Naive thymus-derived CD4-positive, alpha-beta T cell (primary cell): ENCODE measurements at regions of chr18 and their contacts with region 1.

Region 1: DNA sequence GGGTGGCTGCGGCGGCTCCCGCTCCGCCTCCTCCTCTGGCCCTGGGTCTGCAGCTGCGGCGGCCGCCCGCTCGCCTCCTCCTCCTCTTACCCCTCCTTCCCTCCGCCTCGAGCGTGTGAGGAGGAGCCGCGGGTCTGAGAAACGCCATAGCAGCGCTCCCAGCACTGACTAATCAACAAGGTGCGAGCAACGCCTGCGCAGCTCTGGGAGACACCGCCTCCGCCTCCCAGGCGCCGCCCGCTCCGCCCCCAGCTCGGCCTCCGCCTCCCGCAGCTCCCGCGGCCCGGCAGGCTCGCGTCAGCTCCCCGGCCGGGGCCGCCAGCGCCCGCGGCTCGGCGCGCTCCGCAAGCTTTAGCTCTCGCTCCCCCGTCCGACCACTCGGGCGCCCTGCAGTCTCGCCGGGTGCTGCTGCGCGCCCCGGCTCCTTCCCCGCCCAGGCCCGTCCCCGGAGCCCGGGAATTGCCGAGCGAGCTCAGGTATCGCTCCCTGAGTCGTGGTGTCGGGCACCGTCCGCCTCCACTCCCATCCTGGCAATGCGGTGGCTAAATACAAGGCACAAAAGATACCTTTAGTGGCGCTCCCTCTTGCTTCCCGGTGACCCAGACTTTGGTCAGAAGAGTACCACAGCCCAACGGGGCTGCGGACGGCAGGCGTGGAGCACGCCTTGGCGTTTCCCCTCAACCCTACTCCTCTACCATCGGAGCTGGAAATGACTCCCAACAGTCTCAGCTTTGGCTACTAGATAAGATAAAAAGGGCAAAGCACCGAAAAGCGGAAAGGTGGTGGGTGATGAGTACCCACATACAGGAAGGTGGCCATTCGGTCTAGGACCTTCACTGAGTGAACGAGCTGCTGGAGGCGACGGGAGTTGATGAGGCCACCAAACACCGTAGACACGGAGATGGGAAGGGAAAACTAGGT is at the start of gene GAREM1:
- DNase-seq: peak; percentile 67 to 82 (median 77)
- ATAC-seq: peak; percentile 95
- H3K4me3 ChIP-seq: peak within 1 kb of the TSS; percentile 58
- H3K4me3 Mint-ChIP-seq: peak within 1 kb of the TSS; percentile 78 to 91 (median 89)
- H3K27ac ChIP-seq: no peak within 1 kb of the TSS
- H3K27ac Mint-ChIP-seq: peak within 1 kb of the TSS in 7 of 9 donors; percentile 21 to 86 (median 56)
- H3K4me1 ChIP-seq: peaks cover 9 to 14% of the 10 kb centered on the region in 2 donors
- H3K4me1 Mint-ChIP-seq: peaks cover 12 to 33% (median 26%) of the 10 kb centered on the region in 7 donors
- H3K27me3 ChIP-seq: peaks cover 4 to 5% of the 10 kb centered on the region in 2 donors
- H3K27me3 Mint-ChIP-seq: peaks cover 28 to 79% (median 33%) of the 10 kb centered on the region in 5 donors
- total RNA-seq, gene GAREM1: 0.13 to 0.51 (median 0.43) TPM in 3 of 5 experiments, not detected in the others

Region 2: DNA sequence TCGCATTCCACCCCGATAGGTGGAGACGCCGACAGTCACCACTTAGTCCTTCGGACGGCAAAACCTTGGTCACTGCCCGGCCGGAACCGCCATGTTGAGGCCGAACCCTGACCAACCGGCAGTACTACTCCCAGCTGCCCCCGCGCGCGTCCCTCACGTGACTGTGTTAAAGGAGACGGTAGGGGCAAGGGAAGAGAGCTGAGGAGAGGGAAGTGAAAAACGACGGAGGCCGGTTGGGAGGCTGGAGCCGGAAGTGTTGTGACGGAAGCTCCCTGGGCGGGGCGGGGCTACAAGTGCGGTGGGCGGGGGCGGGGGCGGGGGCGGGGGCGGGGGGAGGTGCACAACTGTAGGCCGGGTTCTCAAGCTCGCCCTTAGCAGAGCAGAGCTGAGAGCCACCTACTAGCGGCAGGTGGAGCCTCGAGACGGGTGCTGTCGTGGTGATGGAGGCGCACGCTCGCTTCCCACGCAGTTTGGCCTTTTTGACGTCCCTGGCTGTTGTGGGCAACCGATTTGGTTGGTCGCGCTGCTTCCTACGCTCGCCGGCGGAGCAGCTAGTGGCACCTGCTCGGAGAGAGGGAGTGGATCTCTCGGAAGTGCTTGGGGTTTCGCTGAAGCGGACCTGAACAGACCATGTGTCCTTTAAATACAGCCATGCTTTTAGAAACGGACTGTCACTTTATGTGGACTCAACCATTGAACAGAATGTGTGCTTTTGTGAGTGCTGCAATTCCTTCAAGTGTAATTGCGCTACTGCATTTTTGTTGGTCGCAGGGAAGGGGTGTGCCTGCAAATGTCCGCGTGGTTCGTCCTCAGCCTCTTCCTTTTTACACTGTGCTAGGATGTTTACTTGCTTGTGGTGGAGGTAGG is 527.7 kb before region 1 on chr18 and contains the start of gene TRAPPC8:
- CTCF ChIA-PET with region 1: no interaction called
- POLR2A ChIA-PET with region 1: interaction called, 5 read pairs
- intact Hi-C with region 1: loop called (anchors 1 to 2 kb)
- DNase-seq: peak; percentile 81 to 94 (median 91)
- ATAC-seq: peak; percentile 91
- H3K4me3 ChIP-seq: peak within 1 kb of the TSS; percentile 98
- H3K4me3 Mint-ChIP-seq: peak within 1 kb of the TSS; percentile 95 to 100 (median 98)
- H3K27ac ChIP-seq: peak within 1 kb of the TSS; percentile 97
- H3K27ac Mint-ChIP-seq: peak within 1 kb of the TSS; percentile 95 to 100 (median 99)
- H3K4me1 ChIP-seq: peaks cover 17 to 26% of the 10 kb centered on the region in 2 donors
- H3K4me1 Mint-ChIP-seq: peaks cover 28 to 54% (median 44%) of the 10 kb centered on the region in 7 donors
- H3K27me3 ChIP-seq: no peaks in the 10 kb centered on the region
- H3K27me3 Mint-ChIP-seq: no peaks in the 10 kb centered on the region
- total RNA-seq, gene TRAPPC8: 31.0 to 62.7 (median 44.3) TPM

Region 3: GRCh38 chr18:32158108-32158624 is 312.8 kb before region 1 on chr18:
- CTCF ChIA-PET with region 1: interaction called, 7 read pairs
- POLR2A ChIA-PET with region 1: no interaction called
- intact Hi-C with region 1: loop called (anchors 1 to 5 kb)
- DNase-seq: peak; percentile 34 to 81 (median 75)
- ATAC-seq: peak; percentile 96
- H3K4me3 ChIP-seq: peak overlapping the region; percentile 36
- H3K4me3 Mint-ChIP-seq: peak overlapping the region; percentile 39 to 89 (median 78)
- H3K27ac ChIP-seq: no peak overlapping the region
- H3K27ac Mint-ChIP-seq: peak overlapping the region in 2 of 9 donors; percentile 1 to 14
- H3K4me1 ChIP-seq: no peaks in the 10 kb centered on the region
- H3K4me1 Mint-ChIP-seq: peaks cover 0 to 9% (median 6%) of the 10 kb centered on the region in 7 donors
- H3K27me3 ChIP-seq: no peaks in the 10 kb centered on the region
- H3K27me3 Mint-ChIP-seq: peaks cover 0 to 15% (median 0%) of the 10 kb centered on the region in 5 donors

Region 4: DNA sequence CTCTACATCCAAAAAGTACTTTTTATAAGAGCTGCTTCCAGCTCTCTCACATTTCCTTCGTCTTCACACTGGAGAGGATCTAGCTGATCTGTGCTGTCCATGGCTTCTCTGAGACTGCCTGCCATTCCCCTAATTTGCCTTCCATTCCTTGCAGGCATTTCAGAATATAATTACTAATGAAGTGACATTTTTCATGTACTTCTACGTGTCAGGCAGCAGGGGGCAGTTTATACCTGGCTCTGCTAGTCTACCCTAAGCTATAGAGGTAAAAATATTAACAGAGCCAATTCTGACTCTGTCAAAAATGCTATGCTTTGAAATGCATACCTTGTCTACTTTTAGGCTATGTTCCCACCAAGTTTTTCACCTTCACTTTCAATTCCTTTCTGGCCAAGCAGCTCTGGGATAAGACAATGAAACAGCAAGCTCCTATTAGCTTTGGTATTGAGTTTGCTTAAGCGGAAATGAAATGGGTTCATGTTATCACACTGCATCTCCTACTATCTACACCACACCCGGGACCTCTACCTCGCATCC is 199.2 kb before region 1 on chr18:
- CTCF ChIA-PET with region 1: interaction called, 14 read pairs
- POLR2A ChIA-PET with region 1: no interaction called
- intact Hi-C with region 1: loop called (anchors 1 to 10 kb)
- DNase-seq: peak in 5 of 9 donors; percentile 10 to 25 (median 20)
- ATAC-seq: peak; percentile 34
- H3K4me3 ChIP-seq: no peak overlapping the region
- H3K4me3 Mint-ChIP-seq: no peak overlapping the region
- H3K27ac ChIP-seq: no peak overlapping the region
- H3K27ac Mint-ChIP-seq: no peak overlapping the region
- H3K4me1 ChIP-seq: no peaks in the 10 kb centered on the region
- H3K4me1 Mint-ChIP-seq: no peaks in the 10 kb centered on the region
- H3K27me3 ChIP-seq: no peaks in the 10 kb centered on the region
- H3K27me3 Mint-ChIP-seq: peaks cover 0 to 18% (median 16%) of the 10 kb centered on the region in 5 donors

Region 5: GRCh38 chr18:32289483-32290075 is 181.4 kb before region 1 on chr18:
- CTCF ChIA-PET with region 1: interaction called, 6 read pairs
- POLR2A ChIA-PET with region 1: no interaction called
- intact Hi-C with region 1: loop called in 1 of 2 experiments (anchors 1 kb)
- DNase-seq: peak in 6 of 9 donors; percentile 8 to 34 (median 26)
- ATAC-seq: peak; percentile 67
- H3K4me3 ChIP-seq: no peak overlapping the region
- H3K4me3 Mint-ChIP-seq: no peak overlapping the region
- H3K27ac ChIP-seq: no peak overlapping the region
- H3K27ac Mint-ChIP-seq: no peak overlapping the region
- H3K4me1 ChIP-seq: no peaks in the 10 kb centered on the region
- H3K4me1 Mint-ChIP-seq: no peaks in the 10 kb centered on the region
- H3K27me3 ChIP-seq: no peaks in the 10 kb centered on the region
- H3K27me3 Mint-ChIP-seq: peaks cover 6 to 37% (median 16%) of the 10 kb centered on the region in 5 donors

Region 6: DNA sequence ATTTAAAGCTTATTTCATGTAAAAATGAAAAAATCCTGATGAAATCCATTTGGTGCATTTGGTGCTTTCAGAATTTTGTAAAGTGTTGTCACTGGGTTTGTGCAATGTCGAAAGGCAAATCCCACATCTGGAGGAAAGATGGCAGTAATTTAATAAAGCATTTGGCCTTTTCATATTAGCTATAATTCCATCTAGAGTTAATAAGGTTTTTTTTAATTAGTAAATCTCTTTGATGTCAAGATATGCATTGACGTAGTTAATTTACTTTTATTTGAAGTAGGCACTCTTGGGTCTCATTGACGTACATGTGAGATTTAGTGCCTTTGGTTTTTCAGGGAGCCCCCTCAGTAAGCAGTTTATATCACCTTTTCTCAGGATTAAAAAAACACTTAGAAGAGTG is 12.0 kb after region 1 on chr18:
- CTCF ChIA-PET with region 1: no interaction called
- POLR2A ChIA-PET with region 1: no interaction called
- intact Hi-C with region 1: no loop called
- DNase-seq: no peak
- ATAC-seq: no peak
- H3K4me3 ChIP-seq: no peak overlapping the region
- H3K4me3 Mint-ChIP-seq: no peak overlapping the region
- H3K27ac ChIP-seq: no peak overlapping the region
- H3K27ac Mint-ChIP-seq: no peak overlapping the region
- H3K4me1 ChIP-seq: no peaks in the 10 kb centered on the region
- H3K4me1 Mint-ChIP-seq: no peaks in the 10 kb centered on the region
- H3K27me3 ChIP-seq: no peaks in the 10 kb centered on the region
- H3K27me3 Mint-ChIP-seq: peaks cover 14 to 50% (median 41%) of the 10 kb centered on the region in 5 donors

Region 7: GRCh38 chr18:32530947-32531651 is 60.1 kb after region 1 on chr18:
- CTCF ChIA-PET with region 1: no interaction called
- POLR2A ChIA-PET with region 1: no interaction called
- intact Hi-C with region 1: loop called in 1 of 2 experiments (anchors 1 kb)
- DNase-seq: peak in 7 of 9 donors; percentile 28 to 65 (median 52)
- ATAC-seq: peak; percentile 92
- H3K4me3 ChIP-seq: no peak overlapping the region
- H3K4me3 Mint-ChIP-seq: peak overlapping the region in 2 of 10 donors; percentile 6 to 17
- H3K27ac ChIP-seq: no peak overlapping the region
- H3K27ac Mint-ChIP-seq: peak overlapping the region in 6 of 9 donors; percentile 20 to 61 (median 48)
- H3K4me1 ChIP-seq: peaks cover 0 to 13% of the 10 kb centered on the region in 2 donors
- H3K4me1 Mint-ChIP-seq: peaks cover 10 to 30% (median 23%) of the 10 kb centered on the region in 7 donors
- H3K27me3 ChIP-seq: no peaks in the 10 kb centered on the region
- H3K27me3 Mint-ChIP-seq: peaks cover 0 to 16% (median 4%) of the 10 kb centered on the region in 5 donors